Activated CD8-positive, alpha-beta T cell treated with anti-CD3 and anti-CD28 coated beads for 36 hours (primary cell): ENCODE measurements at regions of chr1 and their contacts with region 1.

Region 1: GRCh38 chr1:172671591-172671990 is 12.7 kb downstream of the FASLG start:
- DNase-seq: no peak
- ATAC-seq: no peak
- H3K4me3 Mint-ChIP-seq: no peak overlapping the region
- H3K27ac Mint-ChIP-seq: no peak overlapping the region
- H3K4me1 Mint-ChIP-seq: peaks cover 84% of the 10 kb centered on the region
- H3K27me3 Mint-ChIP-seq: peaks cover 14% of the 10 kb centered on the region
- CTCF ChIP-seq: no peak

Region 2: DNA sequence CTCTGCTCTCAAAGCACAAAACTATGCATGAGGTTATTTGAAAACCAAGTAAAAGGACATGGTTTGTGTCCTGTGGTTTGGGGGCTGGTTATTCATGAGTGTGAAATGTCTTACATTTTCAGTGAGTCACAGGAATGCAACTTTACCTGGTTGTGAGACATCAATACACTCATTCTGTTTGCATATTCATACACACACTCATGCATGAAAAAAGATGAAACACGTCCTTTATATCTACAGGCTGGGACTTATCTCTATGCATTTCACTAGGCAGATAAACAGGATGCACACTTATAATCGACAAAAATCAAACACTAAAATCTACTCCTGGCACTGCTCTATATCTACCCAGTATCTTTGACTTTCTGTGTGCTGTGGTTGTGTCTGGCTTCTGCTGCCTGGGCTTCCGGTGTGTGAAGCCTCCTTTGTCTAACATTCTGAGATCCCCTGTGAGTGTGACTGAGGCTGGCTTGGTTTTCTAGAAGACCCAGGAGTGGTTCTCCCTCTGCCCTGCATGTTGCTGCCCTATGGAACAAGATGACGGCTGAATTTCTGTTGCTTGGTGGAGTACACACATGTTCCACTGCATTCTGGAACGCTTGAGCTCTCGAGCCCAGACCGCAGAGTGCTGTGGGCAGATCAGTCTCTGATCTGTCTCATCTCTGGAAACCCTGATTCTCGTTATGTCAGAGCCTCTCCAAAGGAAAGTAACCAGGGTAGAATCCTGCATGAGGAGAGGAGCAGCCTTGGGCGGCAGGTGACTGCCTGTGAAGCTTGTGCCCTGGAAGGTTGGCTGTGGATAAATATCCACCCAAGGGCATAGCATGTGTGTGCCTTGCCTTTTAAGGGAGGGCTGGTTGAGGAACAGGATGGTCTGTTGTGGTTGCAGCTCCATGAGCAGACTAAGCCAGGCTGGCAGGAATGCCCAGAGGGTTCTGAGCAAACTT is 32.4 kb before region 1 on chr1:
- CTCF ChIA-PET with region 1: interaction called, 6 read pairs
- POLR2A ChIA-PET with region 1: interaction called, 12 read pairs
- intact Hi-C with region 1: loop called (anchors 2 kb)
- DNase-seq: peak; percentile 94
- ATAC-seq: peak; percentile 75
- H3K4me3 Mint-ChIP-seq: peak overlapping the region; percentile 49
- H3K27ac Mint-ChIP-seq: peak overlapping the region; percentile 98
- H3K4me1 Mint-ChIP-seq: peaks cover 72% of the 10 kb centered on the region
- H3K27me3 Mint-ChIP-seq: no peaks in the 10 kb centered on the region
- CTCF ChIP-seq: no peak

Region 3: GRCh38 chr1:172708452-172708851 is 36.9 kb after region 1 on chr1:
- CTCF ChIA-PET with region 1: interaction called, 4 read pairs
- POLR2A ChIA-PET with region 1: interaction called, 3 read pairs
- intact Hi-C with region 1: loop called (anchors 2 kb)
- DNase-seq: peak; percentile 58
- ATAC-seq: peak; percentile 86
- H3K4me3 Mint-ChIP-seq: peak overlapping the region; percentile 13
- H3K27ac Mint-ChIP-seq: peak overlapping the region; percentile 47
- H3K4me1 Mint-ChIP-seq: peaks cover 17% of the 10 kb centered on the region
- H3K27me3 Mint-ChIP-seq: no peaks in the 10 kb centered on the region
- CTCF ChIP-seq: no peak

Region 4: DNA sequence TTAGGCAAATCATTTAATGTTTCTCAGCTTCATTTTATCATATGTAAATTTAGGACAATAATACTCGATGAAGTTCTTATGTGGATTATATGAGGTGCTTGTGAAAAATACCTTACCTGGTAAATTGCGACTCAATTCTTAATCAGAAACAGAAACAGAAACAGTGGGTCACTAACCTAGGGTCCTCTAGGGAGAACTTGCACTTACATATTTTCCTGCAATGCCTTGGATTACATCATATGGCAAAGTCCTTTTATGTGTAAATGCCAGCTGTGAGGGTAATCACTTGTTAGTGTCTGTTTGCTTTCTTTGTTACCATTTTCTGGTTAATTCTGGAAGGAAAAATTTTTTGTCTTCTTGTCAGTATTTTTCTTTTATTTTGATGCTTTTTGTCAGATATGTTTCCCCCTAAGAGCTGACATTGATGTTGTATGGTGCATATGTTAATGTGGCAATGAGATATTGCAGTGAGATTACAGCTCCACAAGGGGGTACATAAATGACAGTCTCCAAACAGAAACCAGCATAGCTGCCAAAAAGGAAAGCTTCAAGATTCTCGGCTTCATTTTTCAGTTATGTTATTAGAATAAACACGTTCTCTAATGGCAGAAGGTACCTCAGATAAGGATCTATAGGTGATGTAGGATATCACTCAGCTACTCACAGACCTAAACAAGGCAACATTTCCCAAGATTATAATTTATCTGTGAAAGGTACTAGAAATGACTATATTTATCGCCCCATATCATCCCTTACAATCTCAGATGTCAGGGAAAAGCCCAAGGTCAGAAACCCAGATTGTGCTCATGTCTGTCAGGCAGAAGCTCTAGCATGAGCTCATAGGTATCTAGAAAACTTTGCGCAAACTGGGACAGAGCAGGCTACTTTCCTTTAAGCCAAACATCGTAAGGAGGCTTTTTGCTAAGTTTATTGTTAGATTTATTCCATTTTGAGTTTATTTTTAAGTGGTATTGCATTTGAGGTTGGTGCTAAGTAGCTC is 107.2 kb after region 1 on chr1:
- CTCF ChIA-PET with region 1: no interaction called
- POLR2A ChIA-PET with region 1: no interaction called
- intact Hi-C with region 1: no loop called
- DNase-seq: no peak
- ATAC-seq: peak; percentile 91
- H3K4me3 Mint-ChIP-seq: peak overlapping the region; percentile 24
- H3K27ac Mint-ChIP-seq: peak overlapping the region; percentile 44
- H3K4me1 Mint-ChIP-seq: peaks cover 28% of the 10 kb centered on the region
- H3K27me3 Mint-ChIP-seq: no peaks in the 10 kb centered on the region
- CTCF ChIP-seq: peak; percentile 52

Region 5: GRCh38 chr1:172883107-172883791 is 211.7 kb after region 1 on chr1:
- CTCF ChIA-PET with region 1: no interaction called
- POLR2A ChIA-PET with region 1: no interaction called
- intact Hi-C with region 1: no loop called
- DNase-seq: peak; percentile 40
- ATAC-seq: peak; percentile 83
- H3K4me3 Mint-ChIP-seq: no peak overlapping the region
- H3K27ac Mint-ChIP-seq: no peak overlapping the region
- H3K4me1 Mint-ChIP-seq: peaks cover 16% of the 10 kb centered on the region
- H3K27me3 Mint-ChIP-seq: peaks cover 16% of the 10 kb centered on the region
- CTCF ChIP-seq: no peak